GM12878 (cell line): ENCODE measurements at regions of chr3 and their contacts with region 1.

Region 1: DNA sequence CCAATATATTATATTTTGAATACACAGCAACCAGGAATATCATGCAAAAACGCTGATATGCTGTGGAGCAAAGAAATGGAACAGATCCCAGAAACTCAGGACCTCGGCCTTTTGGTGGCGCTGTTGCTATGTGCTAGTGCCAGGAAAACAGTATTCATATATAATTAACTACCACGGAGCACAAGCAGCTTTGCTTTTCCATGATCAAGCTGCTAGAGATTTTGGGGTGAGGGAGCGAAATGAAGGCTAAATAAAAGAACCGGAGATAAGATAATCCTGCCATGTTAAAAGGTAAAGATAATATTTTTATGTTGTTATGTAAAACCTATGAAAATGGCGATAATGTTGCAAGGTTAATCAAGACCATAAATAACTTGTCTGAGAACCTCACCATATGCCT is 157.7 kb upstream of the FAM3D start:
- DNase-seq: no peak
- ATAC-seq: peak; percentile 66
- H3K4me3 ChIP-seq: no peak overlapping the region
- H3K27ac ChIP-seq: no peak overlapping the region
- H3K4me1 ChIP-seq: no peaks in the 10 kb centered on the region
- H3K27me3 ChIP-seq: no peaks in the 10 kb centered on the region
- CTCF ChIP-seq: peak; percentile 46 to 67 (median 51)
- EP300 ChIP-seq: no peak
- POLR2A ChIP-seq: no peak
- RAD21 ChIP-seq: peak; percentile 80

Region 2: GRCh38 chr3:58640700-58641372 is 183.4 kb before region 1 on chr3:
- CTCF ChIA-PET with region 1: interaction called, 13 read pairs
- POLR2A ChIA-PET with region 1: interaction called, 3 read pairs
- RAD21 ChIA-PET with region 1: interaction called, 5 read pairs
- SMC1A ChIA-PET with region 1: interaction called, 5 read pairs
- in situ Hi-C with region 1: no loop called
- intact Hi-C with region 1: loop called (anchors 10 kb)
- DNase-seq: no peak
- ATAC-seq: peak; percentile 97
- H3K4me3 ChIP-seq: no peak overlapping the region
- H3K27ac ChIP-seq: no peak overlapping the region
- H3K4me1 ChIP-seq: no peaks in the 10 kb centered on the region
- H3K27me3 ChIP-seq: no peaks in the 10 kb centered on the region
- CTCF ChIP-seq: peak; percentile 82 to 97 (median 94); a peak in 5 of 6 replicates
- EP300 ChIP-seq: no peak
- POLR2A ChIP-seq: no peak
- RAD21 ChIP-seq: peak; percentile 94

Region 3: DNA sequence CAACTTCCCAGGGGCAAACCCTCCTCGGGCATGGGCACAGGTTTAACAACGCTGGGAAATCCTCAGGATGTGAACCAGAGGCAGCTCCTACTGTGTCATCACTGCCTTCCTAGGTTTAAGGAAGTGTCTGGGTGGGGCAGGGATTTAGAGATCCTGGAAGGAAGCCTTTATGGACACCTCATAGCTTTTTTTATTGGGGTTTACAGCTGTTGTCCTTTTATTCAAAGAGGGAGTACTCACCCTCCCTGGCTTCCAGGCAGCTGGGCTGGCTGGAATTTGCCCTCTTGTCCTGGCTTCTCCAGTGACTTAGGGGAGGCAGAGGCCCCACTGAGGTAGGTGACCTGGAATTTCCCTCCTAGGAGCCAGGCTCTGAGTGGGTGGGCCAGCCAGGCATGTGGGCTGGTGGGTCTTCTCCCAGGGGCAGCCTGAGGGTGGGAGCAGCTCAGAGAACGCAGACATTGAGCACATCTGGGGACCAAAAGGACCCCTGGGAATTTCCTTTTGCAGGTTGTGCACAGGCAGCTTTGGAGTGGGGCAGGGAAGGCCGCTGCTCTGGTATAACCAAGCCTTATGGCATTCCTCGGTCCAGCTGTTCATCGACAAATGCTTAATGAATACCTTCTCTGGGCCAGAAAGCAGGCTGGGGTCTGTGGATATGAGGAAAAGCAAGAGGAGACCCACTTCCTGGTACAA is 144.2 kb before region 1 on chr3:
- CTCF ChIA-PET with region 1: no interaction called
- POLR2A ChIA-PET with region 1: no interaction called
- RAD21 ChIA-PET with region 1: no interaction called
- SMC1A ChIA-PET with region 1: no interaction called
- in situ Hi-C with region 1: no loop called
- intact Hi-C with region 1: no loop called
- DNase-seq: no peak
- ATAC-seq: no peak
- H3K4me3 ChIP-seq: no peak overlapping the region
- H3K27ac ChIP-seq: no peak overlapping the region
- H3K4me1 ChIP-seq: no peaks in the 10 kb centered on the region
- H3K27me3 ChIP-seq: no peaks in the 10 kb centered on the region; a peak in 1 of 4 replicates
- CTCF ChIP-seq: no peak
- EP300 ChIP-seq: no peak
- POLR2A ChIP-seq: no peak
- RAD21 ChIP-seq: no peak

Region 4: GRCh38 chr3:58837856-58838255 is 13.6 kb after region 1 on chr3:
- CTCF ChIA-PET with region 1: interaction called, 25 read pairs
- POLR2A ChIA-PET with region 1: no interaction called
- RAD21 ChIA-PET with region 1: interaction called, 4 read pairs
- SMC1A ChIA-PET with region 1: interaction called, 4 read pairs
- in situ Hi-C with region 1: no loop called
- intact Hi-C with region 1: no loop called
- DNase-seq: no peak
- ATAC-seq: no peak
- H3K4me3 ChIP-seq: no peak overlapping the region
- H3K27ac ChIP-seq: no peak overlapping the region
- H3K4me1 ChIP-seq: no peaks in the 10 kb centered on the region
- H3K27me3 ChIP-seq: no peaks in the 10 kb centered on the region
- CTCF ChIP-seq: no peak
- EP300 ChIP-seq: no peak
- POLR2A ChIP-seq: no peak
- RAD21 ChIP-seq: no peak

Region 5: GRCh38 chr3:58874795-58875194 is 50.5 kb after region 1 on chr3:
- CTCF ChIA-PET with region 1: interaction called, 12 read pairs
- POLR2A ChIA-PET with region 1: no interaction called
- RAD21 ChIA-PET with region 1: interaction called, 15 read pairs
- SMC1A ChIA-PET with region 1: interaction called, 6 read pairs
- in situ Hi-C with region 1: no loop called
- intact Hi-C with region 1: no loop called
- DNase-seq: peak; percentile 59
- ATAC-seq: peak; percentile 94
- H3K4me3 ChIP-seq: no peak overlapping the region
- H3K27ac ChIP-seq: peak overlapping the region; percentile 67
- H3K4me1 ChIP-seq: peaks cover 5% of the 10 kb centered on the region; the same call in 1 of the 2 replicates
- H3K27me3 ChIP-seq: no peaks in the 10 kb centered on the region
- CTCF ChIP-seq: no peak
- EP300 ChIP-seq: peak in 1 of 2 experiments; percentile 77; a peak in 1 of 4 replicates
- POLR2A ChIP-seq: no peak
- RAD21 ChIP-seq: no peak

Region 6: DNA sequence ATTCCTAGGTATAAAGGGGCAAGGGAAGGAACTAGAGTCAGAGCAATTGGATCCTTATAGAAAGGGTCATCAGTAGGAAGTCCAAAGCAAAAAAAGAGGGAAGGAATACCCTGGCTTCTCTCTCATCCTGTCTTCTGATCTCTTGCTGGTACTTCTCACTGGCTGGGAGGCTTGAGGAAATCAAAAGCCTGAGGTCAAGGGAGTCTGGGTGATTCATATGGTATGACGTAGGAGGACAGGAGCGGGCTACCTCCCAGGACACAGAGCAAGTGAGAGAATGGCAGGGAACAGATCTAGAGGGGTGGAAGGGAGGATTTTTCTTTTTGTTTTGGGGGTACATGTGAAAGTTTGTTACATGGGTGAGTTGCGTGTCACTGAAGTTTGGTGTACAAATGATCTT is 149.5 kb after region 1 on chr3:
- CTCF ChIA-PET with region 1: interaction called, 11 read pairs
- POLR2A ChIA-PET with region 1: no interaction called
- RAD21 ChIA-PET with region 1: interaction called, 3 read pairs
- SMC1A ChIA-PET with region 1: interaction called, 4 read pairs
- in situ Hi-C with region 1: no loop called
- intact Hi-C with region 1: no loop called
- DNase-seq: no peak
- ATAC-seq: no peak
- H3K4me3 ChIP-seq: no peak overlapping the region
- H3K27ac ChIP-seq: no peak overlapping the region
- H3K4me1 ChIP-seq: no peaks in the 10 kb centered on the region
- H3K27me3 ChIP-seq: no peaks in the 10 kb centered on the region
- CTCF ChIP-seq: no peak
- EP300 ChIP-seq: no peak
- POLR2A ChIP-seq: no peak
- RAD21 ChIP-seq: no peak

Region 7: DNA sequence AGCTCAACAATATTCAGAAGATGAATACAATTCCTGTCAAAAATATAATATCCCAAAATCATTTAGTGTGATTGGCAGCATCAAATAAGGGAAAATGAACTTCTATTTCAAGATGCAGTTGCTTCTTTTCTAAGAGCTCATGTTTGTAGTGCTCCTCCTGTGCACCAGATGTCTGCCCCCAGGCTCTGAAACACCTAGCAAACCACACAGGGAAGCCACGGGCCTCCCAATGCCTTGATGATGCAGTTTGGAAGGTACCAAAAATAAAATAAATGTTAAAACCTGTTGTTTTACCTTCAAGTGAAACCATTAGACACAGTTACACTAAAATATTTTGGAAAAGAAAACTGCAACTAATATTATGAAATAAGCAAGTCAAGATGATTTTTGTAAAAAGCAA is 203.3 kb after region 1 on chr3:
- CTCF ChIA-PET with region 1: interaction called, 14 read pairs
- POLR2A ChIA-PET with region 1: no interaction called
- RAD21 ChIA-PET with region 1: interaction called, 4 read pairs
- SMC1A ChIA-PET with region 1: interaction called, 5 read pairs
- in situ Hi-C with region 1: no loop called
- intact Hi-C with region 1: no loop called
- DNase-seq: no peak
- ATAC-seq: peak; percentile 53
- H3K4me3 ChIP-seq: no peak overlapping the region
- H3K27ac ChIP-seq: no peak overlapping the region
- H3K4me1 ChIP-seq: no peaks in the 10 kb centered on the region
- H3K27me3 ChIP-seq: no peaks in the 10 kb centered on the region
- CTCF ChIP-seq: no peak
- EP300 ChIP-seq: no peak
- POLR2A ChIP-seq: no peak
- RAD21 ChIP-seq: no peak

Region 8: DNA sequence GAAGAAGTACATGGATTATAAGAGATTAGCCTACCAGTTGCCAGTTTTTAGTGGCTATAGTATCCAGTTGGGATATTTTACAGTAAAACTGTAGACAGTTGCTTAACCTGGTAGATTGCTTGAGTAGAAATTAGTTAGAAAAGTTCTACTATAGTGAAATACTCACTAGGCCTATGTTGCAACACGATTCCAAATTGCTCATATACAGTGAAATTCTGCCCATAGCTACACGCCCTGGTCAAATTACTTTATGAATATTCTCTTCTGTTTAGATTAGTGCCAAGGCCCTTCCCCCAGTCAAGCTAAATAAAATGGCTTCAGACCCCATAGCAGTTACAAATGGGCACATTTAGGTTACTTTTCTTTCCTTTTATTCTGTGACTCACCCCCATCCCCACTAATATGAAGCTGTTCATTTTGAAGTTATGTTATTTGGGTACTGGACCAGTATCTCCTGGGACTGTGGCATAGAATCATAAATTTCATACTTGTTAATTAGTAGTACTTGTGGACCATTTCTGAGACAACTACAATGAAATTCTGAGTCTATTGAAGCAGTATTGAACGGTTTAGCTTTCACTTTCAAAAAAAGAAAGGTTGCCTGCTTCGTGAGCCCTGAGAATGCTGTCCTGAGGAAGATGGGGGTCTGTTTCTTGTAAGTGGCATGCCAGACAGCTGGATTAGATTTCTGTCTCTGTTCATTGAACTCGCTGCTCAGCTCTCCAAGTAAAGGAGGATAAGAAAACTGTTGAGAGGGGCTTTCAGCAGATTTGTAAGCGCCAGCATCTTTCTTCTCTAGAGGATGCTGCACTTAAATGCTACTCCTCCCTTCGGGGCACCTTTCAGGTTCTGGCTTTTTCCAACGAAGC is 291.3 kb after region 1 on chr3:
- CTCF ChIA-PET with region 1: no interaction called
- POLR2A ChIA-PET with region 1: no interaction called
- RAD21 ChIA-PET with region 1: no interaction called
- SMC1A ChIA-PET with region 1: no interaction called
- in situ Hi-C with region 1: no loop called
- intact Hi-C with region 1: no loop called
- DNase-seq: no peak
- ATAC-seq: peak; percentile 88
- H3K4me3 ChIP-seq: peak overlapping the region; percentile 54
- H3K27ac ChIP-seq: no peak overlapping the region
- H3K4me1 ChIP-seq: no peaks in the 10 kb centered on the region
- H3K27me3 ChIP-seq: no peaks in the 10 kb centered on the region
- CTCF ChIP-seq: no peak
- EP300 ChIP-seq: no peak
- POLR2A ChIP-seq: no peak
- RAD21 ChIP-seq: no peak

Region 9: DNA sequence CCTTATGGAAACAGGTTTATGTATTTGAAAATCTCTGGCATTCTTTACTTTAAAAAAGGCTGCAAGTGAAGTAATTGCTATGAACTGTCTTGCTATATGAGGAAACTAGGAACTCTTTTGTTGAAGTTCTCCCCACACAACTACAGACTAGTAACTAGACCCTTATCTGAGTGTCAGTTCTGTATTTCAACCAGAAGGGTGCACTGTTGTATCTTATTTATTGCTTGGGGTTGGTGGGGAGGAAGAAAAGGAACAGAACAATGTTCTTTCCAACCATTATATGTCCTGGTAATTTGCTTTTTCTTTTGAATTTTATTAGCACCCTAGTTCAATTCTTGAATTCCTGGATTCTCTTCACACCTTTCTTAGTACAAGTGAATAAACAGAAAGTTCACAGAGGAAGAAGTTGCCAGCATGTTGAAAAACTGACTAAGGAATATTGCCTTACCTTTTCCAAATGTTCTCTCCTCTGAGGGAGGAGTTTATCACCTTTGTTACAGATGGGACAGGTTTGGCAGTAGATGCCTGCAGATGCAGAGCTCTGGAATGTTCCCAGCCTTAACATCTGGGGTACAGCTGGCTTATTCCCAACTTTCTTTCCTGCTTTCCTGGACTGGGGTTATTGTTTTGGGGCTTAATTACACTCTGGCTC is 388.0 kb after region 1 on chr3:
- CTCF ChIA-PET with region 1: interaction called, 22 read pairs
- POLR2A ChIA-PET with region 1: no interaction called
- RAD21 ChIA-PET with region 1: interaction called, 4 read pairs
- SMC1A ChIA-PET with region 1: interaction called, 5 read pairs
- in situ Hi-C with region 1: no loop called
- intact Hi-C with region 1: no loop called
- DNase-seq: peak; percentile 19
- ATAC-seq: peak; percentile 97
- H3K4me3 ChIP-seq: no peak overlapping the region
- H3K27ac ChIP-seq: no peak overlapping the region
- H3K4me1 ChIP-seq: no peaks in the 10 kb centered on the region
- H3K27me3 ChIP-seq: no peaks in the 10 kb centered on the region
- CTCF ChIP-seq: peak; percentile 52 to 73 (median 66)
- EP300 ChIP-seq: no peak
- POLR2A ChIP-seq: no peak
- RAD21 ChIP-seq: peak; percentile 92

Region 10: GRCh38 chr3:59575113-59576001 is 751.1 kb after region 1 on chr3:
- CTCF ChIA-PET with region 1: no interaction called
- POLR2A ChIA-PET with region 1: no interaction called
- RAD21 ChIA-PET with region 1: no interaction called
- SMC1A ChIA-PET with region 1: no interaction called
- in situ Hi-C with region 1: no loop called
- intact Hi-C with region 1: no loop called
- DNase-seq: peak; percentile 40
- ATAC-seq: peak; percentile 95
- H3K4me3 ChIP-seq: no peak overlapping the region
- H3K27ac ChIP-seq: no peak overlapping the region
- H3K4me1 ChIP-seq: no peaks in the 10 kb centered on the region
- H3K27me3 ChIP-seq: no peaks in the 10 kb centered on the region
- CTCF ChIP-seq: peak; percentile 93 to 97 (median 95)
- EP300 ChIP-seq: no peak
- POLR2A ChIP-seq: no peak
- RAD21 ChIP-seq: peak; percentile 97